MCF 10A (cell line): ENCODE measurements at regions of chr20 and their contacts with region 1.

Region 1: DNA sequence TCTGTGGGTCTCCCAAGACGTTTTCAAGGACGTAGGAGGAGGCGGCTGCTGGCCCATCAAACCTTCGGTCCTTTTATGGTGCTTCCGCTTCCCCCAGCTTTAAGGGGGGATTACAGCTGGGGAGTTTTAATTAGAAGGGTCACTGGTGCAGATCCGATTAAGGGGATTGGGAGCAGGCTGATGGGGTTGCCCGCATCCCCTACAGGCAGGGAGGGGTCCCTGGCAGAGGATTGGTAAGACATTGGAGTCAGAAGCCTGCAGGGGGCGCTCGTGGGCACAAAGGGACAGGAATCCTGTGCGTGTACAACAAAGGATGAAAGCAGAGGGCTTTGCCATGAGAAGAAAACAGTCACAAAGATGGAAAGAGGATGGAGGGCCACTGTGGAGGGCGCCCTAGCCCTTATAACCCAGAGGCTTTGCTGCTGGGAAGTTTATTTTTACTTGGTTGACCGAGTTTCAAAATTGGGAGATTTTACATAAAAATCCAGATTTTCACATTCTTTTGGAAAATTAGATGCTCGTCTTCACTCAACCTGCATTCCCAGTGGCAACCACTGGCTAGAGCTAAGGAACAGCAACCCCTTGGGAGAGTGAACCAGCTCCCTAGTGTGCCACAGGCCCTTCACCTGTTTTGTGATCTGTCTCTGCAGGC is 97.9 kb downstream of the KCNB1 start:
- DNase-seq: peak; percentile 83
- H3K4me3 Mint-ChIP-seq: no peak overlapping the region
- H3K27ac Mint-ChIP-seq: no peak overlapping the region
- H3K4me1 Mint-ChIP-seq: peaks cover 57% of the 10 kb centered on the region
- H3K27me3 Mint-ChIP-seq: no peaks in the 10 kb centered on the region
- CTCF ChIP-seq: peak; percentile 59

Region 2: DNA sequence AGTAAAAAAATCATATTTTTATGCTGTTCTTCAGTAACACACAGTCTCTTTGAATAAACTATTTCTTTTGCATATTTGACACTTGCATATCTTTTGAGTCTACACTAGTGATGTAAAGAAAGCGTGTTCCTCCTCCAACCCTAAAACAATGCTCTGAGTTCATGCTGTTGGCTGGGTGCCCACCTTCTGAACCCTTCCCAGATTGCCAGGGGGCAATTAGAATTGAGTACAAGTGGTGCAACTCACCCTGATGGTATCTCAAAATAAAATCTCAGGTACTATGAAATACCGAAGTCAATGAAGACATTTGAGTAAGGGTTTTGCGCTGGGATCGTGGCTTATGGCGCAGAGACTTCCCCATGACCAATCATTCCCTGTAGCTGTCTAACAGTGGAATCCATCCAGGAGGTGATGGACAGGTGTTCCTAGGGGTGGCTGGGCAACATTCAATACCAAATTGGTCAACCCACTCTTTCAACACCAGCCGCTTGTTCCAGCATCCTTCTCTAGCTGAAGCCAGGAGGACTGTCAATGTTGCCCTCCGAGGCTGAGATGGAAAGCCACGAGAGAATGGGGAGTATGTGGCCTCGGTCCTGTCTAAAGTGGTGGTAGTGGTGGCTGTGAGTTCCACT is 12.4 kb before region 1 on chr20:
- CTCF ChIA-PET with region 1: interaction called, 5 read pairs
- POLR2A ChIA-PET with region 1: interaction called, 35 read pairs
- intact Hi-C with region 1: no loop called
- DNase-seq: peak; percentile 95
- H3K4me3 Mint-ChIP-seq: peak overlapping the region; percentile 29
- H3K27ac Mint-ChIP-seq: no peak overlapping the region
- H3K4me1 Mint-ChIP-seq: peaks cover 14% of the 10 kb centered on the region
- H3K27me3 Mint-ChIP-seq: no peaks in the 10 kb centered on the region
- CTCF ChIP-seq: no peak

Region 3: DNA sequence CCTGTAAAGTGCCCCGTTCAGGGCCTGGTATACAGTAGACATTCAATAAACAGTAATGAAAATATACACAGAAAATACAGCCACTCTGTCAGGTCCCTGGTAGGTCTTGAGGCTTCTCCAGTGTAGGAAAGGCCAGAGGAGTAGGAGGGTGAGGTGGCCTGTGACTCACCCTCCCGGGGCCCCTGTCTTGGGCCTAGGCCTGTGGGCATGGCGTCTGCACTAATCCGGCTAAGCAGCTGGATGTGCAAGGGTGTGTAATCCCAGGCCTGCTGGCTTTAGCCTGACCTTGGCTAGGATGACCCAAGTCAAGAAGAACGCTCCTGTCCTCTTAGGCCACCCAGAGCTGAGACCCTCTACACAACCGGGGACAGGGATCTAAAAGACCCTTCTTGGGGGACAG is 13.0 kb after region 1 on chr20:
- CTCF ChIA-PET with region 1: interaction called, 14 read pairs
- POLR2A ChIA-PET with region 1: interaction called, 17 read pairs
- intact Hi-C with region 1: no loop called
- DNase-seq: peak; percentile 86
- H3K4me3 Mint-ChIP-seq: no peak overlapping the region
- H3K27ac Mint-ChIP-seq: no peak overlapping the region
- H3K4me1 Mint-ChIP-seq: peaks cover 20% of the 10 kb centered on the region
- H3K27me3 Mint-ChIP-seq: no peaks in the 10 kb centered on the region
- CTCF ChIP-seq: no peak

Region 4: DNA sequence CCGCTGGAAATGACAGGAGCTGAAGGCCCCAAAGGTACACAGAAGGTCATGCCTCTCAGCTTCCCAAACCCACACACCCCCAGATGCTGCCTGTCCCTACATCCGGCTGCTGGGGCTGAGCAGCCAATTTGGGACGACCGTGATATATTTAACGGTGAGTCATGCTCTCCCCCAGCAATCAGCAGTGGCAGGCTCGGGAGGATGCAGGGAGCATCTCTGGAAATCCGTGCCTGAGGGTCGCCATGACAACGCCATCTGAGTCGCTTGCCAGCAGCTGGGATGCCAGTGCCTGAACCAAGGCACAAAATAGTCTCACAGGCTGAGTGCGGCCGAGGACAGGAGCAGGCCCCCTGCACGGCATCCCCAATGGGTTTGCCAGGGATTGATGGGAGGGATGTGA is 40.0 kb after region 1 on chr20:
- CTCF ChIA-PET with region 1: interaction called, 5 read pairs
- POLR2A ChIA-PET with region 1: interaction called, 14 read pairs
- intact Hi-C with region 1: no loop called
- DNase-seq: no peak
- H3K4me3 Mint-ChIP-seq: no peak overlapping the region
- H3K27ac Mint-ChIP-seq: no peak overlapping the region
- H3K4me1 Mint-ChIP-seq: peaks cover 29% of the 10 kb centered on the region
- H3K27me3 Mint-ChIP-seq: no peaks in the 10 kb centered on the region
- CTCF ChIP-seq: no peak

Region 5: DNA sequence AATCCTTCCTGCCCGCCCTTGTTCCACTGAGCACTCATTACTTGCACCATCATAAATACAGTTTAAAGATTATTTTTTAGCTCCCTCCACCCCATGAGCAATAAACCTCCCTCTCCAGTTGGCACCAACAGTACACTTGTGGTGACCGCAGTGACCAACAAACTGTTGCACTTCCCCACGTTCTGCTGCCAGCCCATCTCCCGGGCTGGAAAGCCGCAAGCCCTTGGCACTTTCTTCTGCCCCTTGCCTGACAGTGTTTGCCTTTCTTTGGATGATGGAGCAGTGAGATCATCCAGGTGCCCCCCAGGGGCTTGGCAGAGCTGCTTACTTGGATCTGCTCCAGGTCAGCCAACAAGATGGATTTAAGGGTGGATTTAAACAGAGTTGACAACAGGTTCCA is 76.4 kb after region 1 on chr20:
- CTCF ChIA-PET with region 1: no interaction called
- POLR2A ChIA-PET with region 1: no interaction called
- intact Hi-C with region 1: loop called (anchors 5 kb)
- DNase-seq: peak; percentile 96
- H3K4me3 Mint-ChIP-seq: no peak overlapping the region
- H3K27ac Mint-ChIP-seq: peak overlapping the region; percentile 7
- H3K4me1 Mint-ChIP-seq: peaks cover 34% of the 10 kb centered on the region
- H3K27me3 Mint-ChIP-seq: no peaks in the 10 kb centered on the region
- CTCF ChIP-seq: no peak

Region 6: DNA sequence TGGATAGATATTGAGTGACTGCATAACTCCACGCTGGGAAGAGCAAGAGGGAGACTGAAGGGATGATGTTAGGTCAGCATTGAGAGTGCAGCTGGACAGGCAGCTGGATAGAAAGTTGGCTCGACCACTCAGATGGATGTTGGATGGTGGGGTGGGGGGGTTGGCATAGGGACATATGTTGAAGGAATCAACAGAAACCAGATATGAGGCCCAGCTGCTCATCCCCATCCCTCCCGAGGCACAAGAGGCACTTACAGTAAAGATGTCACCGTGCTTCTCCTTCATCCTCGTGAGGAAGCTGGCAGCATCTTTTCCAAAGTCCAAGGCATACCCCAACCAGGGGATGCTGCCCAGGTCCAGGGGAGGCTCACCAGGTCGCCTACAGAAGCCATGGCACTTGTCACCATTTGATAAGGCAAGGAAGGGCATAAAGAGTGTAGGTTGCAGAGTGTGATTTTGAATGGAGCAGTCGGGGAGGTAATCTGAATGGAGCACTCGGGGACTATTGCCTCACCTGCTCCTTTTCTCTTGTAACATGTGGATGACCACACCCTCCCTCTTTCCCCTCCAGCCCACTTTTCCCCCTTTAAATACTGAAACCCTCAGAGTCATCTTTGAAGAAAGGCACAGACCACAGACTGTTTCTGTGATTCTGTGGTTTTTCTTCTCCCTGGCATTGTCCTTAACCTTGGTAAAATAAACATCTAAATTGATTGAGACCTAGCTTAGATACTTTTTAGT is 165.4 kb after region 1 on chr20:
- CTCF ChIA-PET with region 1: no interaction called
- POLR2A ChIA-PET with region 1: no interaction called
- intact Hi-C with region 1: no loop called
- DNase-seq: no peak
- H3K4me3 Mint-ChIP-seq: no peak overlapping the region
- H3K27ac Mint-ChIP-seq: no peak overlapping the region
- H3K4me1 Mint-ChIP-seq: no peaks in the 10 kb centered on the region
- H3K27me3 Mint-ChIP-seq: no peaks in the 10 kb centered on the region
- CTCF ChIP-seq: no peak